Spleen (tissue), 13 donors: ENCODE measurements at regions of chr1 and their contacts with region 1.

Region 1: GRCh38 chr1:234309598-234310459 is 63.4 kb upstream of the COA6 start:
- DNase-seq: peak; percentile 85
- H3K4me3 ChIP-seq: peak overlapping the region in 1 of 8 donors; percentile 5
- H3K27ac ChIP-seq: no peak overlapping the region
- H3K4me1 ChIP-seq: peaks cover 0 to 25% (median 8%) of the 10 kb centered on the region in 6 donors
- H3K27me3 ChIP-seq: peaks cover 0 to 3% (median 0%) of the 10 kb centered on the region in 7 donors
- CTCF ChIP-seq: peak; percentile 60 to 93 (median 81)
- POLR2A ChIP-seq: no peak

Region 2: GRCh38 chr1:233928123-233928522 is 381.7 kb before region 1 on chr1:
- intact Hi-C with region 1: no loop called
- DNase-seq: no peak
- H3K4me3 ChIP-seq: no peak overlapping the region
- H3K27ac ChIP-seq: no peak overlapping the region
- H3K4me1 ChIP-seq: no peaks in the 10 kb centered on the region
- H3K27me3 ChIP-seq: peaks cover 0 to 12% (median 0%) of the 10 kb centered on the region in 7 donors
- CTCF ChIP-seq: no peak
- POLR2A ChIP-seq: no peak

Region 3: GRCh38 chr1:234114648-234115307 is 195.1 kb before region 1 on chr1:
- intact Hi-C with region 1: loop called (anchors 5 kb)
- DNase-seq: no peak
- H3K4me3 ChIP-seq: peak overlapping the region in 1 of 8 donors; percentile 31
- H3K27ac ChIP-seq: no peak overlapping the region
- H3K4me1 ChIP-seq: peaks cover 0 to 7% (median 0%) of the 10 kb centered on the region in 6 donors
- H3K27me3 ChIP-seq: peaks cover 0 to 24% (median 0%) of the 10 kb centered on the region in 7 donors
- CTCF ChIP-seq: peak in 9 of 11 experiments; percentile 3 to 71 (median 56)
- POLR2A ChIP-seq: no peak